GM13976 (cell line): ENCODE measurements at regions of chr2 and their contacts with region 1.

Region 1: GRCh38 chr2:24382363-24383073 is 22.2 kb upstream of the ITSN2 start:
- DNase-seq: peak; percentile 80
- CTCF ChIP-seq: peak; percentile 75

Region 2: GRCh38 chr2:24123195-24123921 is 259.2 kb before region 1 on chr2 and contains the starts of genes FAM228B and PFN4:
- in situ Hi-C with region 1: loop called (anchors 25 kb)
- DNase-seq: peak; percentile 95
- CTCF ChIP-seq: no peak

Region 3: GRCh38 chr2:24231461-24231881 is 151.0 kb before region 1 on chr2:
- in situ Hi-C with region 1: loop called (anchors 10 kb)
- DNase-seq: no peak
- CTCF ChIP-seq: no peak